Left ventricle myocardium inferior (tissue), 1 donor: ENCODE measurements at regions of chr3 and their contacts with region 1.

Region 1: GRCh38 chr3:187210545-187211327 is 13.4 kb downstream of the RTP1 start:
- DNase-seq: no peak
- H3K4me3 ChIP-seq: no peak overlapping the region
- H3K27ac ChIP-seq: peak overlapping the region; percentile 31
- H3K4me1 ChIP-seq: peaks cover 25% of the 10 kb centered on the region
- H3K27me3 ChIP-seq: no peaks in the 10 kb centered on the region
- CTCF ChIP-seq: no peak

Region 2: DNA sequence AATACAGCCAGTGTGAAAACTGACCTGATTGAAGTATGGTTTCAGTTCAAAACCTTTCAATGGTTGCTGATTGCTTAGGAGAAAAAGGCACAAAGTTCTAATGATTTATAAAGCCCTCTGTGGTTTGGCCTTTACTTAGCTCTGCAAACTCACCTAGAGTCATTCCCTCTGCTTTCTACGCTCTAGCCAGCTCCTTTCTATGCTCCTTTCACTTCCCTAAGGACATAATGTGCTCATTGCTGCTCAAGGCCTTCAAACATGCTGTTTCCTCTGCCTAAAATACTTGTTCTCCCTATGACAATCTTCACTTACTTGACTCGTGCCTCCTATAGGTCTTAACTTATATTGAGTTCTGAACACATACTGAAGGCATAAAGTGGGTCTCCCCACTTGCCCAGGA is 90.4 kb before region 1 on chr3:
- intact Hi-C with region 1: no loop called
- DNase-seq: no peak
- H3K4me3 ChIP-seq: no peak overlapping the region
- H3K27ac ChIP-seq: no peak overlapping the region
- H3K4me1 ChIP-seq: no peaks in the 10 kb centered on the region
- H3K27me3 ChIP-seq: no peaks in the 10 kb centered on the region
- CTCF ChIP-seq: no peak

Region 3: GRCh38 chr3:187679638-187680396 is 469.1 kb after region 1 on chr3:
- intact Hi-C with region 1: loop called (anchors 10 kb)
- DNase-seq: peak; percentile 73
- H3K4me3 ChIP-seq: no peak overlapping the region
- H3K27ac ChIP-seq: no peak overlapping the region
- H3K4me1 ChIP-seq: peaks cover 10% of the 10 kb centered on the region
- H3K27me3 ChIP-seq: peaks cover 34% of the 10 kb centered on the region
- CTCF ChIP-seq: peak; percentile 95